Common myeloid progenitor, CD34-positive (primary cell): ENCODE measurements at regions of chr1 and their contacts with region 1.

Region 1: GRCh38 chr1:10398734-10399623 is at the start of gene PGD:
- DNase-seq: peak; percentile 97 to 99 (median 99)
- H3K4me3 ChIP-seq: peak within 1 kb of the TSS; percentile 74 to 97 (median 92)
- H3K27ac ChIP-seq: peak within 1 kb of the TSS in 1 of 2 experiments; percentile 81
- H3K4me1 ChIP-seq: peaks cover 7 to 33% (median 20%) of the 10 kb centered on the region in 4 experiments
- H3K27me3 ChIP-seq: no peaks in the 10 kb centered on the region

Region 2: GRCh38 chr1:10387413-10388079 is 11.4 kb before region 1 on chr1:
- CTCF ChIA-PET with region 1: interaction called, 56 read pairs
- POLR2A ChIA-PET with region 1: interaction called, 22 read pairs
- DNase-seq: peak in 2 of 3 donors; percentile 25 to 56
- H3K4me3 ChIP-seq: peak overlapping the region in 2 of 7 experiments; percentile 42 to 45
- H3K27ac ChIP-seq: peak overlapping the region in 1 of 2 experiments; percentile 35
- H3K4me1 ChIP-seq: peaks cover 5 to 37% (median 16%) of the 10 kb centered on the region in 4 experiments
- H3K27me3 ChIP-seq: no peaks in the 10 kb centered on the region

Region 3: DNA sequence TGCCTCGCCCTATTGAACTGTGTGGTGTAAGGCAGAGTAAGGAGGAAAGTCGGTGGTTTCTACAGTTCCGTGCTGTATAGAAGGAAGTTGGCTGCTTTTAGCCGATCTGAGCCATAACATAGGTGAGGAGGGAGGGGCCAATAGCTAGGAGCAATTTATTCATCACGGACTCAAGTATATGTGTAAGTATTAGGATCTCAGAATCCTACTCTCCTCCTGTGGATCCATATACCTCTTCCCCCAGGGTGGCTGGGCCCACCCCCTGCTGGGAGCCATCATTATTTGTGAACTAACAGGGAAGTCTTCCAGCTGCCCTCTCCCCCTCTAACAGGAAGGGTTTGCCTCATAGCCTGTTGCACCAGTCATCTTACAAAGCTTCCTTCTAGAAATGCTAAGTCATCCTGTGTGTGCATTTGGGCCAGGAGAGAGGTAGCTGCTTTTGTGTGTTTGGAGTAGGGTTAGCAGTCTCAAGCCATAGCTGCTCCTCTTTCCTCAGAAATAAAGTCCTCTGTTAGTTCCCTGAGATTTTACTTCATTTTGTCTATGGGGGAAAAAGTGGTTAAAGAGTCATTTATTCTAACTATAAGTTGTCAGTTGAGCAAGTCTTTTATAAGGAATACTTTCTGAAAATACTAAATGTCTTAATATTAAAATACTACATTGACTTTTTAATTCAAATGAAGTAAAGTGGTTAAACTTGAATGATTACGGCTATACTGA is 16.4 kb after region 1 on chr1:
- CTCF ChIA-PET with region 1: interaction called, 16 read pairs
- POLR2A ChIA-PET with region 1: interaction called, 5 read pairs
- DNase-seq: peak; percentile 92 to 96 (median 94)
- H3K4me3 ChIP-seq: peak overlapping the region in 5 of 7 experiments; percentile 25 to 58 (median 41)
- H3K27ac ChIP-seq: peak overlapping the region; percentile 91 to 95
- H3K4me1 ChIP-seq: peaks cover 8 to 31% (median 29%) of the 10 kb centered on the region in 4 experiments
- H3K27me3 ChIP-seq: no peaks in the 10 kb centered on the region